ENCODE measurements at regions of chr16 and their contacts with region 1.

Region 1: GRCh38 chr16:20735490-20735889 is 6.1 kb downstream of the THUMPD1 start:
- DNase-seq: no peak
- H3K4me3 ChIP-seq: no peak overlapping the region
- H3K27ac ChIP-seq: no peak overlapping the region
- H3K4me1 ChIP-seq: peaks cover 14 to 51% (median 28%) of the 10 kb centered on the region in 4 donors
- H3K27me3 ChIP-seq: no peaks in the 10 kb centered on the region
- CTCF ChIP-seq: no peak
- EP300 ChIP-seq: no peak
- POLR2A ChIP-seq: no peak

Region 2: GRCh38 chr16:20637247-20637646 is 98.2 kb before region 1 on chr16:
- intact Hi-C with region 1: no loop called
- DNase-seq: no peak
- H3K4me3 ChIP-seq: no peak overlapping the region
- H3K27ac ChIP-seq: no peak overlapping the region
- H3K4me1 ChIP-seq: no peaks in the 10 kb centered on the region
- H3K27me3 ChIP-seq: no peaks in the 10 kb centered on the region
- CTCF ChIP-seq: no peak
- EP300 ChIP-seq: no peak
- POLR2A ChIP-seq: no peak

Region 3: DNA sequence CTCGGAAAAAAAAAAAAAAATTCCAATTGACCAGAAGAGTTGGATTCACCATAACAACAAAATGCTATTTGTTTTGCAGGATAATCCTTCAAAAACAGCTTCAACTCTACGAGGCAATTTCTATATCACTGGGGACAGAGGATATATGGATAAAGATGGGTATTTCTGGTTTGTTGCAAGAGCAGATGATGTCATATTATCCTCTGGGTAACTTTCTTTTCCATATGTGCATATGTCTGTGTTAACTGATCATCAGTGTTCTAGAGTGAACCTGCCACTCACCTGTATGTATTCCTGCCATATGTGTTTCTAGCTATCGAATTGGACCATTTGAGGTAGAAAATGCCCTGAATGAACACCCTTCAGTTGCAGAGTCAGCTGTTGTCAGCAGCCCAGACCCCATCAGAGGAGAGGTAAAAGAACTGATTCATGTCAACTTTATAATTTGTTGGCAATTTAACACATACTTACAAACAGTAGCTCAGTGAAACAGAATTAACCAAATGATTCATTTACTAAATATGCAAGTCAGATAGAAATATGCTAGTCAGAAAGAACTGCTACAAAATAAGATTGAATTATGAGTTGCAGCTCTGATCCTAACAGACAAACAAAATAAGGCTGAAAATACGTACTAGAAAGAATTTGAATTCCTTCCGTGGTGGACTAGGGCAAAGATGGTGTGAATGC is 56.6 kb after region 1 on chr16:
- intact Hi-C with region 1: loop called (anchors 5 kb)
- DNase-seq: no peak
- H3K4me3 ChIP-seq: no peak overlapping the region
- H3K27ac ChIP-seq: no peak overlapping the region
- H3K4me1 ChIP-seq: peaks cover 0 to 3% (median 0%) of the 10 kb centered on the region in 4 donors
- H3K27me3 ChIP-seq: no peaks in the 10 kb centered on the region
- CTCF ChIP-seq: no peak
- EP300 ChIP-seq: no peak
- POLR2A ChIP-seq: no peak